PC-9 (cell line): ENCODE measurements at regions of chr15 and their contacts with region 1.

Region 1: GRCh38 chr15:90320061-90320884 is 31.8 kb upstream of the ZNF774 start:
- DNase-seq: peak; percentile 79 to 84
- H3K4me3 ChIP-seq: peak overlapping the region; percentile 29; the same call in 1 of the 2 replicates
- H3K27ac ChIP-seq: peak overlapping the region; percentile 31; the same call in 1 of the 2 replicates
- H3K4me1 ChIP-seq: peaks cover 26% of the 10 kb centered on the region
- H3K27me3 ChIP-seq: no peaks in the 10 kb centered on the region
- CTCF ChIP-seq: peak; percentile 91

Region 2: GRCh38 chr15:89628806-89629715 is 691.2 kb before region 1 on chr15:
- CTCF ChIA-PET with region 1: interaction called, 11 read pairs
- POLR2A ChIA-PET with region 1: no interaction called
- intact Hi-C with region 1: no loop called
- DNase-seq: no peak
- H3K4me3 ChIP-seq: no peak overlapping the region
- H3K27ac ChIP-seq: no peak overlapping the region
- H3K4me1 ChIP-seq: no peaks in the 10 kb centered on the region
- H3K27me3 ChIP-seq: no peaks in the 10 kb centered on the region
- CTCF ChIP-seq: no peak

Region 3: GRCh38 chr15:89936051-89936785 is 384.1 kb before region 1 on chr15:
- CTCF ChIA-PET with region 1: no interaction called
- POLR2A ChIA-PET with region 1: no interaction called
- intact Hi-C with region 1: no loop called
- DNase-seq: no peak
- H3K4me3 ChIP-seq: no peak overlapping the region
- H3K27ac ChIP-seq: peak overlapping the region; percentile 63; the same call in 1 of the 2 replicates
- H3K4me1 ChIP-seq: peaks cover 15% of the 10 kb centered on the region
- H3K27me3 ChIP-seq: no peaks in the 10 kb centered on the region
- CTCF ChIP-seq: no peak

Region 4: DNA sequence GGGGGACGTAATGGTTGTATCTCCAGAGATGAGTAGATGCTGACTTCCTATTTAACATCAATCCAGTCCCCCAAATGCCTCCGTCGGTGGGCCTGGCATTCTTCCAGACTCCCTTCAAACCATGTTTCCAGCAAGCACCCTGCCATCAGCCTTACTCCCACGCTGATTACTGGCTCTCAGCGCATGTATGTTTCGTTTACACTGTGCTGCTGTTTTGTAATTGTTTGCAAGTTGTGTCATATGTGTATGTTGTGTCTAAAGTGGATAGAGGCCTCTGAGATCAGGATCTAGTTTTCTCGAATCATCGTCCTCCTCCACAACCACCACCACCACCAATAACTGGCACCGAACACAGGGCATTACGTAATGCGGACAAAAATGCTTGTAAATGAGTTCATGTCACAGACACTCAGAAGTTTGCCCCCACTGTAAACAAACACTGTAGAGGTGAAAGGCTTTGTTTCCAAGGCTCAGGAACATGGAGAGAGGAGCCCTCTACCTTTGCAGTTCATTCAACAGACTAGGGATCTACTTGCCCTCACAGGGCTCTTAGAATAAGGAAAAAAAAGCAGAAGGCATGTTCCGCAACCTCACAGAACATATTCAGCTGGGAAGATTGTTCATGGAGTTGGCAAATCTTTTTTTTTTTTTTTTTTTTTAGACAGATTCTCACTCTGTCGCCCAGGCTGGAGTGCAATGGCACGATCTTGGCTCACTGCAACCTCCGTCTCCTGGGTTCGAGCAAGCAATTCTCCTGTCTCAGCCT is 165.2 kb before region 1 on chr15:
- CTCF ChIA-PET with region 1: no interaction called
- POLR2A ChIA-PET with region 1: no interaction called
- intact Hi-C with region 1: no loop called
- DNase-seq: peak in 1 of 2 experiments; percentile 81
- H3K4me3 ChIP-seq: no peak overlapping the region
- H3K27ac ChIP-seq: no peak overlapping the region
- H3K4me1 ChIP-seq: peaks cover 48% of the 10 kb centered on the region
- H3K27me3 ChIP-seq: no peaks in the 10 kb centered on the region
- CTCF ChIP-seq: no peak

Region 5: GRCh38 chr15:90291679-90292356 is 28.5 kb before region 1 on chr15:
- CTCF ChIA-PET with region 1: interaction called, 4 read pairs
- POLR2A ChIA-PET with region 1: no interaction called
- intact Hi-C with region 1: loop called (anchors 1 kb)
- DNase-seq: peak; percentile 15 to 47
- H3K4me3 ChIP-seq: no peak overlapping the region
- H3K27ac ChIP-seq: no peak overlapping the region
- H3K4me1 ChIP-seq: peaks cover 4% of the 10 kb centered on the region; the same call in 1 of the 2 replicates
- H3K27me3 ChIP-seq: no peaks in the 10 kb centered on the region
- CTCF ChIP-seq: no peak

Region 6: GRCh38 chr15:90362936-90363212 is 42.6 kb after region 1 on chr15:
- CTCF ChIA-PET with region 1: interaction called, 9 read pairs
- POLR2A ChIA-PET with region 1: no interaction called
- intact Hi-C with region 1: loop called (anchors 5 kb)
- DNase-seq: peak; percentile 21 to 71
- H3K4me3 ChIP-seq: no peak overlapping the region
- H3K27ac ChIP-seq: peak overlapping the region; percentile 94
- H3K4me1 ChIP-seq: peaks cover 47% of the 10 kb centered on the region
- H3K27me3 ChIP-seq: no peaks in the 10 kb centered on the region
- CTCF ChIP-seq: no peak

Region 7: DNA sequence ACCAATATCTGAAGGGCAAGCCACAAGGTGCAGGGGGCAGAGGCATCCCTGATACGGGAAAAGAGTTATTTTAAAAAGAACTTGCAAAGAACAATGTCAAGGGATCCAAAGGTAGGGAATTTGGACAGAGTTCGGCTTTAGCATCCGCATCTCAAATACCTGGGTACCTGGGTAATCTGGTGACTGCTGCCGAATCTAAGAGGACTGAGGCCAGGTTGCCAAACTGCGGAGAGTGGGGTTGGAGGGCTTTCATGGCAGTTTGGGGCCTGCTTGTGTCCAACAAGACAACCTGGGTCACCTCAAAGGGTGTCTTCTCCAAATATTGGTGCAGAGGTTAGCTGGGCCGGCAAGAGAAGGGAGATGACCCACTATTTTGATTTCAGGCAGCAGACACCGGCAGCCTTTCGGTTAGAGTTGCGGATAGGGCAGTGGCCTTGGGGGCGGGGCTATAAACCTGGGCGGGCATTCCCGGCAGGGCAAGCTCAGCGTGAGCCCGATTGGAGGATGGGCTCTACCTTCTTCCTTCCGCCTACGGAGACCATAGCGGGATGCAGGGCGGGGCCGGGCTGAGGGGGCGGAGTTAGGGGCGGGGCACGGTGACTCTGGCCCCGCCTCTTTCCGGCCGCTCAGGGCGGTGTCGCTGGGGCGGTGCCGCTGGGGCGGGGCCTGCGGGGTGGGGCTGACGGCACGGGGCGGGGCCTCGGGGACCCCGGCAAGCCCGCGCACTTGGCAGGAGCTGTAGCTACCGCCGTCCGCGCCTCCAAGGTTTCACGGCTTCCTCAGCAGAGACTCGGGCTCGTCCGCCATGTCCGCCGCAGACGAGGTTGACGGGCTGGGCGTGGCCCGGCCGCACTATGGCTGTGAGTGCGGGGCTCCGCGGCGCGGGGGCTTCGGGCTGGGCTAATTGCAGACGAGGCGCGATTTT is 67.5 kb after region 1 on chr15 and contains the start of gene IQGAP1:
- CTCF ChIA-PET with region 1: interaction called, 5 read pairs
- POLR2A ChIA-PET with region 1: interaction called, 5 read pairs
- intact Hi-C with region 1: loop called (anchors 2 kb)
- DNase-seq: peak; percentile 86 to 96
- H3K4me3 ChIP-seq: peak within 1 kb of the TSS; percentile 87
- H3K27ac ChIP-seq: peak within 1 kb of the TSS; percentile 58
- H3K4me1 ChIP-seq: peaks cover 16% of the 10 kb centered on the region
- H3K27me3 ChIP-seq: no peaks in the 10 kb centered on the region
- CTCF ChIP-seq: no peak
- total RNA-seq, gene IQGAP1: 113 and 164 TPM in 2 replicates

Region 8: DNA sequence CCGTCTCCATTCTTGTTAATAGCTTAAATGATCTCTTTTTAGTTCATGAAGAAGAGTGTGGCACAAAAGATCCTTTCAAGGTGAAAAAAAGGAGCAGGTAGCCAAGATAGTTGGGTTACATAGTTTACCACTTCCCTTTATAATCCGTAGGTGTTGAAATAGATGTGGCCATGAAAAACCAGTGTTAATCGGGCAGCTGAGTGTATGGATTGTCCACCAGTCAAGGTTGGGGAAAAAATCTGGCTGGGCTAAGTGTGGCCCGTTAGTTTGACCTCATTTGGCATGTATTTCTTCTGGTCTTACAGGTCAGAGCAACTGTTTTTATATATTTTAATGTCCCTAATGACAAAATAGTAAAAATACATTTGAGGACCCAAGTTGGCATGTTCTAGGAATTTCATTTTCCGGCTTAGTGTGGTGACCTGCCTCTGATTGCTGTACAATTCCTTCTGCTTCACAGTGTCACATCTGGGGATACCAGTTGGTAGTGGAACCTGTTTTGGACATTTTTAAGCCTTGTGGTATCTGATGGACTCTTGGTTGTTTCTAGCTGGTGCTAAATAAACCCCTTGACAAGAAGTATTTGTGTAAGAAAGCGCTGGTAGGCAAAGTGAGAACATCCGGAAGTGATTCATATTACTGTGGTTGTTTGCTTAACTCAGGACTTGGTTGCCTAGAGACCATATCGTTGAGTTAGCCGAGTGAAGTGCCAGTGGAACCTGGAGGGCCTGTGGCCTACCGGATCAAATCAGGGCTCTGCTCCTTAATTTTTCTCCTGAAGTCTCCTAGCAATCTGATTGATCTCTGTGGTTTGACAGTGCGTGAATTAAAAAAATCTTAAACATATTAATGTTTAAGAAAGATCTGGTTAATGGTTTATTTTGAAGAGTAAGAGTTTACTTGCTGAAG is 80.4 kb after region 1 on chr15:
- CTCF ChIA-PET with region 1: no interaction called
- POLR2A ChIA-PET with region 1: no interaction called
- intact Hi-C with region 1: loop called (anchors 5 kb)
- DNase-seq: peak; percentile 70 to 98
- H3K4me3 ChIP-seq: peak overlapping the region; percentile 35; the same call in 1 of the 2 replicates
- H3K27ac ChIP-seq: peak overlapping the region; percentile 88
- H3K4me1 ChIP-seq: peaks cover 65% of the 10 kb centered on the region
- H3K27me3 ChIP-seq: no peaks in the 10 kb centered on the region
- CTCF ChIP-seq: no peak

Region 9: GRCh38 chr15:90594301-90594701 is 274.0 kb after region 1 on chr15:
- CTCF ChIA-PET with region 1: interaction called, 5 read pairs
- POLR2A ChIA-PET with region 1: no interaction called
- intact Hi-C with region 1: loop called (anchors 2 kb)
- DNase-seq: peak in 1 of 2 experiments; percentile 57
- H3K4me3 ChIP-seq: no peak overlapping the region
- H3K27ac ChIP-seq: no peak overlapping the region
- H3K4me1 ChIP-seq: peaks cover 19% of the 10 kb centered on the region
- H3K27me3 ChIP-seq: no peaks in the 10 kb centered on the region
- CTCF ChIP-seq: no peak